Common myeloid progenitor, CD34-positive (primary cell): ENCODE measurements at regions of chr19 and their contacts with region 1.

Region 1: GRCh38 chr19:30682999-30683536 is 310.9 kb downstream of the ZNF536 start:
- DNase-seq: peak; percentile 63 to 91 (median 86)
- H3K4me3 ChIP-seq: no peak overlapping the region
- H3K27ac ChIP-seq: no peak overlapping the region
- H3K4me1 ChIP-seq: peaks cover 0 to 13% (median 5%) of the 10 kb centered on the region in 4 experiments
- H3K27me3 ChIP-seq: peaks cover 0 to 22% (median 8%) of the 10 kb centered on the region in 5 experiments

Region 2: GRCh38 chr19:30669329-30670010 is 13.6 kb before region 1 on chr19:
- CTCF ChIA-PET with region 1: interaction called, 19 read pairs
- POLR2A ChIA-PET with region 1: no interaction called
- DNase-seq: peak; percentile 34 to 51 (median 42)
- H3K4me3 ChIP-seq: no peak overlapping the region
- H3K27ac ChIP-seq: no peak overlapping the region
- H3K4me1 ChIP-seq: peaks cover 0 to 3% (median 1%) of the 10 kb centered on the region in 4 experiments
- H3K27me3 ChIP-seq: peaks cover 0 to 29% (median 6%) of the 10 kb centered on the region in 5 experiments